CD8-positive, alpha-beta T cell (primary cell): ENCODE measurements at regions of chr5 and their contacts with region 1.

Region 1: GRCh38 chr5:671459-672328 is 21.5 kb downstream of the TPPP start:
- DNase-seq: peak; percentile 47 to 79 (median 71)
- ATAC-seq: peak; percentile 78
- H3K4me3 ChIP-seq: no peak overlapping the region
- H3K4me3 Mint-ChIP-seq: no peak overlapping the region
- H3K27ac ChIP-seq: no peak overlapping the region
- H3K27ac Mint-ChIP-seq: no peak overlapping the region
- H3K4me1 ChIP-seq: peaks cover 22% of the 10 kb centered on the region
- H3K4me1 Mint-ChIP-seq: peaks cover 16% of the 10 kb centered on the region
- H3K27me3 ChIP-seq: peaks cover 0 to 4% of the 10 kb centered on the region in 2 experiments
- H3K27me3 Mint-ChIP-seq: peaks cover 8% of the 10 kb centered on the region
- CTCF ChIP-seq: peak; percentile 69

Region 2: GRCh38 chr5:892394-893136 is 220.9 kb after region 1 on chr5 and contains the starts of genes BRD9 and TRIP13:
- CTCF ChIA-PET with region 1: interaction called, 17 read pairs
- POLR2A ChIA-PET with region 1: interaction called, 4 read pairs
- intact Hi-C with region 1: no loop called
- DNase-seq: peak; percentile 68 to 92 (median 81)
- ATAC-seq: peak; percentile 94
- H3K4me3 ChIP-seq: peak within 1 kb of the TSS; percentile 85 to 90
- H3K4me3 Mint-ChIP-seq: peak within 1 kb of the TSS; percentile 85
- H3K27ac ChIP-seq: peak within 1 kb of the TSS; percentile 74 to 77
- H3K27ac Mint-ChIP-seq: peak within 1 kb of the TSS; percentile 91
- H3K4me1 ChIP-seq: peaks cover 17% of the 10 kb centered on the region
- H3K4me1 Mint-ChIP-seq: peaks cover 22% of the 10 kb centered on the region
- H3K27me3 ChIP-seq: no peaks in the 10 kb centered on the region
- H3K27me3 Mint-ChIP-seq: no peaks in the 10 kb centered on the region
- CTCF ChIP-seq: no peak
- total RNA-seq, gene BRD9: 99.8 to 108 TPM
- total RNA-seq, gene TRIP13: 0.33 to 0.76 TPM

Region 3: GRCh38 chr5:902129-902916 is 230.6 kb after region 1 on chr5:
- CTCF ChIA-PET with region 1: interaction called, 73 read pairs
- POLR2A ChIA-PET with region 1: no interaction called
- intact Hi-C with region 1: loop called in 1 of 2 experiments (anchors 2 kb)
- DNase-seq: peak in 1 of 9 experiments; percentile 37
- ATAC-seq: no peak
- H3K4me3 ChIP-seq: no peak overlapping the region
- H3K4me3 Mint-ChIP-seq: no peak overlapping the region
- H3K27ac ChIP-seq: no peak overlapping the region
- H3K27ac Mint-ChIP-seq: no peak overlapping the region
- H3K4me1 ChIP-seq: no peaks in the 10 kb centered on the region
- H3K4me1 Mint-ChIP-seq: no peaks in the 10 kb centered on the region
- H3K27me3 ChIP-seq: no peaks in the 10 kb centered on the region
- H3K27me3 Mint-ChIP-seq: no peaks in the 10 kb centered on the region
- CTCF ChIP-seq: no peak